CD4-positive, alpha-beta T cell (primary cell): ENCODE measurements at regions of chr2 and their contacts with region 1.

Region 1: DNA sequence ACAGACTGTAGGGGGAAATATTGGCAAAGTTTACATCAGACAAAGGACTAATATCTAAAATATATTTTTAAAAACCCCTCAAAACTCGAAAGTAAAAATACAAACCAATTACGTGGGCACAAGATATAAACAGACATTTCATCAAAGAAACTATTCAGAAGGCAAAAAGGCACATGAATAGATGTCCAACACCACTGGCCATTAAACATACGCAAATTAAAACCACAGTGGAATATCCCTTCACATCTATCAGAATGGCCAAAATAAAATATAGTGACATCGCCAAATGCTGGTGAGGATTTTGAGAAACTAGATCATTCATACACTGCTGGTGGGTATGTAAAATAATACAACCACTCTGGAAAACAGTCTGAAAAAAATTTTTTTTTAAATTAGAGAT is 30.6 kb upstream of the PAPOLG start:
- DNase-seq: no peak
- ATAC-seq: no peak
- H3K4me3 ChIP-seq: no peak overlapping the region
- H3K4me3 Mint-ChIP-seq: no peak overlapping the region
- H3K27ac ChIP-seq: no peak overlapping the region
- H3K27ac Mint-ChIP-seq: no peak overlapping the region
- H3K4me1 ChIP-seq: no peaks in the 10 kb centered on the region
- H3K4me1 Mint-ChIP-seq: no peaks in the 10 kb centered on the region
- H3K27me3 ChIP-seq: no peaks in the 10 kb centered on the region
- H3K27me3 Mint-ChIP-seq: no peaks in the 10 kb centered on the region
- CTCF ChIP-seq: no peak

Region 2: GRCh38 chr2:60628026-60628425 is 97.4 kb before region 1 on chr2:
- CTCF ChIA-PET with region 1: no interaction called
- POLR2A ChIA-PET with region 1: no interaction called
- intact Hi-C with region 1: no loop called
- DNase-seq: no peak
- ATAC-seq: no peak
- H3K4me3 ChIP-seq: no peak overlapping the region
- H3K4me3 Mint-ChIP-seq: no peak overlapping the region
- H3K27ac ChIP-seq: no peak overlapping the region
- H3K27ac Mint-ChIP-seq: no peak overlapping the region
- H3K4me1 ChIP-seq: no peaks in the 10 kb centered on the region
- H3K4me1 Mint-ChIP-seq: no peaks in the 10 kb centered on the region
- H3K27me3 ChIP-seq: peaks cover 5 to 6% of the 10 kb centered on the region in 2 experiments
- H3K27me3 Mint-ChIP-seq: peaks cover 40% of the 10 kb centered on the region
- CTCF ChIP-seq: no peak

Region 3: DNA sequence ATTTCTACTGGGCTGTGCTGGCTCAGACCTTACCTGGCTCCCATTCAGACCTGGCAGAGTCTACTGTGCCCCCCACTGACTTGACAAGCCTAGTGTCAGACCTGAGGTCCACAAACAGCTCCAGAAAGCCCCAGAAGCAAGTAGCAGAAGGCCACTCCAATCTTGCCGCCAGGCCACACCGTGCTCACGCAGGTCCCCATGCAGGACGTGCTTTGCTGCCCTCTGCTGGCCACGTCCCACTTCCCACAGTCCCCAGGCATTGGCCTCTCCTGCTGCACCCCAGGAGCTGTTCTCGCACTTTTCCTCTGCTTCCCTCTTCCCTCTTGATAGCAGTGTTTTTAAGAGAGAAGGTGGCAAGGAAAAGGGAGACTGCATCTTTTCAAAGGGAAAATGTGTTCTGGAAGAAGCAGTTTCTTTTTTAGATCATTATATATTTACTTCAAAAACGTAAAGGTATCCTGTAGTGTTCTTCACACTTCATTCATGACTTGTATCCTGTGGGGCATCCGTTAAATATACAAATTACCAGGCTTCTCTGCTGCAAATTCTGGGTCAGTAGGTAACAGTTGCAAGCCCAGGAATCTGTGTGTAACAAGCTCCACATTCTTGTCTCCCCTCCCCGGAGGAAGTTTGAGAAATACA is 50.8 kb before region 1 on chr2:
- CTCF ChIA-PET with region 1: no interaction called
- POLR2A ChIA-PET with region 1: no interaction called
- intact Hi-C with region 1: no loop called
- DNase-seq: peak; percentile 53 to 83 (median 72)
- ATAC-seq: peak; percentile 85
- H3K4me3 ChIP-seq: no peak overlapping the region
- H3K4me3 Mint-ChIP-seq: no peak overlapping the region
- H3K27ac ChIP-seq: no peak overlapping the region
- H3K27ac Mint-ChIP-seq: no peak overlapping the region
- H3K4me1 ChIP-seq: peaks cover 3% of the 10 kb centered on the region
- H3K4me1 Mint-ChIP-seq: no peaks in the 10 kb centered on the region
- H3K27me3 ChIP-seq: peaks cover 0 to 5% of the 10 kb centered on the region in 2 experiments
- H3K27me3 Mint-ChIP-seq: peaks cover 11% of the 10 kb centered on the region
- CTCF ChIP-seq: peak; percentile 96

Region 4: DNA sequence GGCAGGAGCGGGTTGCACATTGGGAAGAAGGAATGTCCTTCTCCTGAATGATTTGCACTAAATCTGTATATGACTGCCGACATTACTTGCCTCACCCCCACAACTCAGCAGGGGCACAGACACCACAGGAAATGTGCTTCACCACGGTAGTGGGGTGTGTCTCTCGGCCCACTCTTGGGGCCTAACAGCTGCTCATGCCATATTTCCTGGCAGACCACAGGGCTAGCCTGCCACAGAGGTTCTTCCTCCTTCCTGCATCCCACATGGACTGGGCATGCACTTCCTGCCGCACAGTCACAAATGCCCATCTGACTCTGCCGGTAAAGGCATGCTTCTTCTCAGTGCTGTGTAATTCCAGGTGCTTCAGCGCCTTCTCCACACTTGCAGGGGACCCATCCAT is 20.3 kb after region 1 on chr2:
- CTCF ChIA-PET with region 1: no interaction called
- POLR2A ChIA-PET with region 1: no interaction called
- intact Hi-C with region 1: loop called in 1 of 2 experiments (anchors 1 kb)
- DNase-seq: peak in 3 of 14 experiments; percentile 3 to 30 (median 8)
- ATAC-seq: no peak
- H3K4me3 ChIP-seq: no peak overlapping the region
- H3K4me3 Mint-ChIP-seq: no peak overlapping the region
- H3K27ac ChIP-seq: no peak overlapping the region
- H3K27ac Mint-ChIP-seq: no peak overlapping the region
- H3K4me1 ChIP-seq: peaks cover 13% of the 10 kb centered on the region
- H3K4me1 Mint-ChIP-seq: peaks cover 12% of the 10 kb centered on the region
- H3K27me3 ChIP-seq: no peaks in the 10 kb centered on the region
- H3K27me3 Mint-ChIP-seq: no peaks in the 10 kb centered on the region
- CTCF ChIP-seq: no peak

Region 5: GRCh38 chr2:60867848-60868247 is 142.4 kb after region 1 on chr2:
- CTCF ChIA-PET with region 1: no interaction called
- POLR2A ChIA-PET with region 1: no interaction called
- intact Hi-C with region 1: no loop called
- DNase-seq: peak in 8 of 14 experiments; percentile 11 to 84 (median 38)
- ATAC-seq: peak; percentile 89
- H3K4me3 ChIP-seq: no peak overlapping the region
- H3K4me3 Mint-ChIP-seq: peak overlapping the region; percentile 43
- H3K27ac ChIP-seq: peak overlapping the region in 1 of 2 donors; percentile 46
- H3K27ac Mint-ChIP-seq: peak overlapping the region; percentile 71
- H3K4me1 ChIP-seq: peaks cover 17% of the 10 kb centered on the region
- H3K4me1 Mint-ChIP-seq: peaks cover 16% of the 10 kb centered on the region
- H3K27me3 ChIP-seq: no peaks in the 10 kb centered on the region
- H3K27me3 Mint-ChIP-seq: no peaks in the 10 kb centered on the region
- CTCF ChIP-seq: no peak

Region 6: GRCh38 chr2:61165946-61166345 is 440.5 kb after region 1 on chr2:
- CTCF ChIA-PET with region 1: no interaction called
- POLR2A ChIA-PET with region 1: no interaction called
- intact Hi-C with region 1: no loop called
- DNase-seq: no peak
- ATAC-seq: no peak
- H3K4me3 ChIP-seq: no peak overlapping the region
- H3K4me3 Mint-ChIP-seq: no peak overlapping the region
- H3K27ac ChIP-seq: no peak overlapping the region
- H3K27ac Mint-ChIP-seq: no peak overlapping the region
- H3K4me1 ChIP-seq: no peaks in the 10 kb centered on the region
- H3K4me1 Mint-ChIP-seq: peaks cover 8% of the 10 kb centered on the region
- H3K27me3 ChIP-seq: no peaks in the 10 kb centered on the region
- H3K27me3 Mint-ChIP-seq: no peaks in the 10 kb centered on the region
- CTCF ChIP-seq: no peak